ENCODE measurements at regions of chr15 and their contacts with region 1.

Region 1: DNA sequence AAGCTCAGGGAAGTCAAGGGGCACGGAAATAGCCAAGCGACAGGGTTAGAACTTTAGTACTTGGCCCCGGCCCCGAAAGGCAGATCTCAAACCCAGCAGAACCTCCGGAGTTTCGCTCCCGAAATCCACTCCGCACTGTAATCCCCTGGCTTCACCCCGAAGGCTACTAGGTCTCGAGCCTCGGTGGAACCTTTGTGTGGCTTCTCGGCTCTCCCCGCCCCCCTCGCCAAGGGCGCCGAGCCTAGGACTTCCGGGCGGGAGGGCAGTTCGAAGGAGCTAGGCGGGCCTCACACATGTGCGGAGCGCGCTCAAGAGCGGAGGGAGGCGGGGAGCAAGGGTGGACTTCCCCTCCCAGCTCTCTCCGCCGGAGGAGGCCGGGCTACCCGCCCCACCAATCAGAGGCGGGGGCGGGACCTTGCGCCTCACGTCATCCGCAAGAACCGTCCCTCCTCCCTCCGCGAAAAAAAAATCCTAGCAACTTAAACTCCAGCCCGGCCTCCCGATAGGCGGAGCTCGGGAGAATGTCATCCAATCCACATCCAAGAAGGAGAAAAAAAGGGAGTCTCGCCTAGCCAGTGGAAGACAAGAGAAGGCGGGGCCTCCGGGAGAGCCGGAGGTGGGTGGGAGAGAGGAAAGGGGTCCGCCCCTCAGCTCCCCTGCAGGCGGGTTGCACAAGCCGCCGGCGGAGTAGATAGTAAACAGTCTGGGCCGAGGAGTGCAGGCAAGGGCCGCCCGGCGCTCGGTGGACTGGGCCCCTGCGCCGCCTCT is 2.4 kb upstream of the SIN3A start:
- DNase-seq: peak; percentile 86 to 100 (median 99)
- ATAC-seq: peak; percentile 54
- H3K4me3 ChIP-seq: peak overlapping the region; percentile 89
- H3K4me3 Mint-ChIP-seq: peak overlapping the region; percentile 91 to 99 (median 96)
- H3K27ac ChIP-seq: peak overlapping the region; percentile 97
- H3K27ac Mint-ChIP-seq: peak overlapping the region; percentile 94 to 99 (median 98)
- H3K4me1 ChIP-seq: peaks cover 17 to 29% of the 10 kb centered on the region in 2 donors
- H3K4me1 Mint-ChIP-seq: peaks cover 19 to 40% (median 30%) of the 10 kb centered on the region in 7 donors
- H3K27me3 ChIP-seq: no peaks in the 10 kb centered on the region
- H3K27me3 Mint-ChIP-seq: peaks cover 0 to 2% (median 0%) of the 10 kb centered on the region in 5 donors

Region 2: GRCh38 chr15:74373731-74374647 is 1079.9 kb before region 1 on chr15:
- CTCF ChIA-PET with region 1: no interaction called
- POLR2A ChIA-PET with region 1: no interaction called
- intact Hi-C with region 1: loop called in 1 of 2 experiments (anchors 5 kb)
- DNase-seq: peak; percentile 82 to 94 (median 91)
- ATAC-seq: peak; percentile 97
- H3K4me3 ChIP-seq: peak overlapping the region; percentile 98
- H3K4me3 Mint-ChIP-seq: peak overlapping the region; percentile 68 to 89 (median 84)
- H3K27ac ChIP-seq: peak overlapping the region; percentile 62
- H3K27ac Mint-ChIP-seq: peak overlapping the region; percentile 18 to 82 (median 40)
- H3K4me1 ChIP-seq: peaks cover 9% of the 10 kb centered on the region in 2 donors
- H3K4me1 Mint-ChIP-seq: peaks cover 0 to 32% (median 15%) of the 10 kb centered on the region in 7 donors
- H3K27me3 ChIP-seq: no peaks in the 10 kb centered on the region
- H3K27me3 Mint-ChIP-seq: peaks cover 0 to 31% (median 5%) of the 10 kb centered on the region in 5 donors

Region 3: DNA sequence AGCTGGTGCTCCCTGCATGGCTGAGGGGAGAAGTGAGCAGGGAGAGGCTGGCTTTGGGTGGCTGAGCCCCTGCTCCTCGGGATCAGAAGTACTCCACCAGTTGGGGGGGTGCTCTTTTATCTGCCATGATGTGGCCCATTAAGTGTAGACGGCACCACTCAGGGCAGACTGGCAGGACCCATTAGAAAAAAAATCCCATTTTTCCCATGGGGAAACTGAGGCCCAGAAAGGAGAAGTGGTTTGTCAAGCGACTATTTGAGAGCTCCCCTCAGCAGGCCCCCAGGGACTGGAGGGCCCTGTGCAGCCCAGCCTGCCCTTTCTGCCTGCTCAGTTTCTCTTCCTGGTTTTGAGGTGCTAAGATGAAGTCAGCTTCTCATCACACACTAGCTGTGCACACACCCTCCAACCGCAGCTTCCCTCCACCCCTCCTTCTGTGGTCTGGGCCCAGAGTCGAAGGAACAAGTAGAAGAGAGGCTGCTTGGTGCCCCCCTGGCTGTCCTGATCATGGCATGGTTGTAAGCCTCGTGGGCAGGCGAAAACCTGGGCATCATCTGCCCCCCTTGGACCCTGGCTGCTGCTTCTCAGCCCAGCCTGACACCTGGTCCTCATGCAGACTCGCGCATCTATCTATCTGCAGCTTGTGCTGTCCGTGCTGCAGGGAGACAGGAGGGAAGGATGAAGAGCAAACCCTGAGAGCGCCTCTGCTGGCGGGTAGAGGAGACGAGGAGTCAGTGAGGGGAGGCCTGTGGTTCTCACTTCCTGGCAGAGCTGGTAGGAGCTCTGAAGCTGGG is 666.4 kb before region 1 on chr15:
- CTCF ChIA-PET with region 1: no interaction called
- POLR2A ChIA-PET with region 1: interaction called, 3 read pairs
- intact Hi-C with region 1: loop called in 1 of 2 experiments (anchors 2 kb)
- DNase-seq: peak; percentile 69 to 97 (median 96)
- ATAC-seq: peak; percentile 85
- H3K4me3 ChIP-seq: peak overlapping the region; percentile 85
- H3K4me3 Mint-ChIP-seq: peak overlapping the region; percentile 87 to 97 (median 93)
- H3K27ac ChIP-seq: peak overlapping the region; percentile 92
- H3K27ac Mint-ChIP-seq: peak overlapping the region; percentile 95 to 99 (median 98)
- H3K4me1 ChIP-seq: peaks cover 66 to 72% of the 10 kb centered on the region in 2 donors
- H3K4me1 Mint-ChIP-seq: peaks cover 57 to 78% (median 75%) of the 10 kb centered on the region in 7 donors
- H3K27me3 ChIP-seq: no peaks in the 10 kb centered on the region
- H3K27me3 Mint-ChIP-seq: no peaks in the 10 kb centered on the region

Region 4: GRCh38 chr15:75201609-75202250 is 252.2 kb before region 1 on chr15 and contains the start of gene C15orf39:
- CTCF ChIA-PET with region 1: no interaction called
- POLR2A ChIA-PET with region 1: interaction called, 3 read pairs
- intact Hi-C with region 1: loop called in 1 of 2 experiments (anchors 2 kb)
- DNase-seq: peak; percentile 66 to 88 (median 84)
- ATAC-seq: peak; percentile 78
- H3K4me3 ChIP-seq: peak within 1 kb of the TSS; percentile 84
- H3K4me3 Mint-ChIP-seq: peak within 1 kb of the TSS; percentile 89 to 98 (median 94)
- H3K27ac ChIP-seq: peak within 1 kb of the TSS; percentile 92
- H3K27ac Mint-ChIP-seq: peak within 1 kb of the TSS; percentile 69 to 95 (median 88)
- H3K4me1 ChIP-seq: peaks cover 26 to 27% of the 10 kb centered on the region in 2 donors
- H3K4me1 Mint-ChIP-seq: peaks cover 19 to 68% (median 39%) of the 10 kb centered on the region in 7 donors
- H3K27me3 ChIP-seq: no peaks in the 10 kb centered on the region
- H3K27me3 Mint-ChIP-seq: no peaks in the 10 kb centered on the region
- total RNA-seq, gene C15orf39: 30.9 to 124 (median 50.5) TPM

Region 5: GRCh38 chr15:75508840-75509532 is 55.1 kb after region 1 on chr15:
- CTCF ChIA-PET with region 1: interaction called, 9 read pairs
- POLR2A ChIA-PET with region 1: interaction called, 3 read pairs
- intact Hi-C with region 1: loop called in 1 of 2 experiments (anchors 2 kb)
- DNase-seq: peak in 7 of 9 donors; percentile 38 to 65 (median 55)
- ATAC-seq: peak; percentile 37
- H3K4me3 ChIP-seq: no peak overlapping the region
- H3K4me3 Mint-ChIP-seq: no peak overlapping the region
- H3K27ac ChIP-seq: no peak overlapping the region
- H3K27ac Mint-ChIP-seq: peak overlapping the region in 5 of 9 donors; percentile 2 to 31 (median 21)
- H3K4me1 ChIP-seq: no peaks in the 10 kb centered on the region
- H3K4me1 Mint-ChIP-seq: peaks cover 0 to 5% (median 4%) of the 10 kb centered on the region in 7 donors
- H3K27me3 ChIP-seq: no peaks in the 10 kb centered on the region
- H3K27me3 Mint-ChIP-seq: no peaks in the 10 kb centered on the region

Region 6: GRCh38 chr15:75647370-75648155 is 193.7 kb after region 1 on chr15 and contains the start of gene SNX33:
- CTCF ChIA-PET with region 1: no interaction called
- POLR2A ChIA-PET with region 1: interaction called, 175 read pairs
- intact Hi-C with region 1: no loop called
- DNase-seq: peak; percentile 24 to 73 (median 43)
- ATAC-seq: peak; percentile 71
- H3K4me3 ChIP-seq: peak within 1 kb of the TSS; percentile 82
- H3K4me3 Mint-ChIP-seq: peak within 1 kb of the TSS; percentile 80 to 91 (median 86)
- H3K27ac ChIP-seq: peak within 1 kb of the TSS; percentile 68
- H3K27ac Mint-ChIP-seq: peak within 1 kb of the TSS; percentile 44 to 88 (median 79)
- H3K4me1 ChIP-seq: peaks cover 6 to 18% of the 10 kb centered on the region in 2 donors
- H3K4me1 Mint-ChIP-seq: peaks cover 12 to 49% (median 38%) of the 10 kb centered on the region in 7 donors
- H3K27me3 ChIP-seq: no peaks in the 10 kb centered on the region
- H3K27me3 Mint-ChIP-seq: peaks cover 0 to 9% (median 0%) of the 10 kb centered on the region in 5 donors
- total RNA-seq, gene SNX33: 0.94 to 3.4 (median 1.4) TPM

Region 7: GRCh38 chr15:75705853-75706681 is 252.2 kb after region 1 on chr15:
- CTCF ChIA-PET with region 1: no interaction called
- POLR2A ChIA-PET with region 1: no interaction called
- intact Hi-C with region 1: no loop called
- DNase-seq: no peak
- ATAC-seq: peak; percentile 24
- H3K4me3 ChIP-seq: no peak overlapping the region
- H3K4me3 Mint-ChIP-seq: no peak overlapping the region
- H3K27ac ChIP-seq: no peak overlapping the region
- H3K27ac Mint-ChIP-seq: peak overlapping the region in 1 of 9 donors; percentile 1
- H3K4me1 ChIP-seq: no peaks in the 10 kb centered on the region
- H3K4me1 Mint-ChIP-seq: peaks cover 0 to 4% (median 0%) of the 10 kb centered on the region in 7 donors
- H3K27me3 ChIP-seq: no peaks in the 10 kb centered on the region
- H3K27me3 Mint-ChIP-seq: peaks cover 0 to 4% (median 0%) of the 10 kb centered on the region in 5 donors